ENCODE measurements at regions of chr1 and their contacts with region 1.

Region 1: GRCh38 chr1:205591522-205592351 is 40.1 kb downstream of the ELK4 start:
- DNase-seq: peak; percentile 79 to 94 (median 86)
- H3K4me3 ChIP-seq: peak overlapping the region in 1 of 4 donors; percentile 50
- H3K27ac ChIP-seq: no peak overlapping the region
- H3K4me1 ChIP-seq: peaks cover 0 to 4% of the 10 kb centered on the region in 2 donors
- H3K27me3 ChIP-seq: no peaks in the 10 kb centered on the region
- CTCF ChIP-seq: peak; percentile 92 to 99 (median 99)
- POLR2A ChIP-seq: no peak

Region 2: DNA sequence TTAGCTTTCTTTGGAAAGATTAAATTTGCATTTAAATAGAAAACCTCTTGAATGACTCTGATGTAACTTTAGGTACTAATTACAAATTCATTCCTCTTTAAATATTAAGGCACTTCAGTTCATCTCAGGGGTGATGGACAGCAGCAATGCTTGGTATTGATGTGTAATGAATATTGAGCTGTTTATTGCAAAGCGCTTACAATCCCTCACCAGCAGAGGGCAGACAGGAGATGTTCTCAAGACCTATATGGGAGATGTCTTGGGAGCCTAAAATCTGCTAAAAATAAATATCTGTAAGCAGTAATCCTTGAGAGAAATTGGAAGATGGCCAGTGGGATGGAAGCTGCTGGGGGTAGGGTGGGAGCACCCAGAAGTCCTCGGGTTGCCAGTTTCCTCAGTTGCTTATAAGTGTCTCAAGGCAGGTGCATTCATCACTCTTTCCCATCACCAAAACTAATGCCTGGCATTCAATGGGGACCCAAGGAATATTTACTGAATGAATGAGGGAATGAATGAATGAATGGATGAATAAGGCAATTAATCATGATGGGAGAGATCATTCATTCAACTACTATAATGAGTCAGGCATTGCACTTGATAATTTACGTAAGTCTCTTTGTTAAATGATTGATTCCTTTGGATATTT is 237.4 kb before region 1 on chr1:
- intact Hi-C with region 1: no loop called
- DNase-seq: peak; percentile 63 to 91 (median 75)
- H3K4me3 ChIP-seq: no peak overlapping the region
- H3K27ac ChIP-seq: peak overlapping the region in 2 of 5 donors; percentile 46 to 69
- H3K4me1 ChIP-seq: peaks cover 25 to 27% of the 10 kb centered on the region in 2 donors
- H3K27me3 ChIP-seq: no peaks in the 10 kb centered on the region
- CTCF ChIP-seq: peak; percentile 59 to 90 (median 86)
- POLR2A ChIP-seq: no peak

Region 3: DNA sequence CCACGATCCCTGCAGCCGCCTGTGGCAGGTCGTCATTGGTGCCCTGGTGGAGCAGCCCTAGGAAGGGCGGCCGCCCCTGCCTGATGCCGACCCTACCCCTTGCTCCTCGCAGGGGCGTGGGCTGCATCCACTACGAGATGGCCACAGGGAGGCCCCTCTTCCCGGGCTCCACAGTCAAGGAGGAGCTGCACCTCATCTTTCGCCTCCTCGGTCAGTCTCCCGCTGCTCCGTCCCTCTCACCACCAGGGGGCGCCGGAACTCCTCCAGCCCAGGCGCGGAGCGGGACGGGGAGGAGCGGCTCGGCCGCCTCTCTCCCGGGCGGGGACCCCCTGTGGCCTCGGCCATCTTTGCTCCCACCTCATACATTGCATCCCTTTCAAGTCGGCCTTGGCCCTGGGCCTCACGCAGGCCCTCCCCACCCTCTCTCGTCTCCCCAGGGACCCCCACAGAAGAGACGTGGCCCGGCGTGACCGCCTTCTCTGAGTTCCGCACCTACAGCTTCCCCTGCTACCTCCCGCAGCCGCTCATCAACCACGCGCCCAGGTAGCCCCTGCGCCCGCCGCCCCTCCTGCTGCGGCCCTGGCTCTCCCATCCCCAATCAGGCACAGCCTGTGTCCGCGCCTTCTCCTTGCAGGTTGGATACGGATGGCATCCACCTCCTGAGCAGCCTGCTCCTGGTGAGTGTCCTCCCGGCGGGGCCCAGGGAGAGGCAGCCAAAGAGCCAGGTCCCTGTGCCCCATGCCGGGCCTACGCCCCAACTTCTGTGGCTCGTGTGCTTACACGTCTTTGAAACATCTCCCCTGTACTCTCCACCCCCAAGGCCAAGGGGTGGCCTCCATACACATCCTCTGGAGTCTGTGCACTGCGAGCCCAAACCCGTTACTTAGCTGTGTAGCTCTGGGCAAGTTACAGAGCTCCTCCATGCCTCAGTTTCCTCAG is 62.6 kb before region 1 on chr1:
- intact Hi-C with region 1: loop called (anchors 5 kb)
- DNase-seq: peak; percentile 57 to 86 (median 81)
- H3K4me3 ChIP-seq: peak overlapping the region in 1 of 4 donors; percentile 29
- H3K27ac ChIP-seq: no peak overlapping the region
- H3K4me1 ChIP-seq: no peaks in the 10 kb centered on the region
- H3K27me3 ChIP-seq: no peaks in the 10 kb centered on the region
- CTCF ChIP-seq: peak; percentile 73 to 97 (median 86)
- POLR2A ChIP-seq: no peak

Region 4: GRCh38 chr1:205536759-205537361 is 54.9 kb before region 1 on chr1:
- intact Hi-C with region 1: loop called in 1 of 2 experiments (anchors 5 kb)
- DNase-seq: peak in 6 of 7 donors; percentile 35 to 62 (median 42)
- H3K4me3 ChIP-seq: no peak overlapping the region
- H3K27ac ChIP-seq: no peak overlapping the region
- H3K4me1 ChIP-seq: no peaks in the 10 kb centered on the region
- H3K27me3 ChIP-seq: peaks cover 3% of the 10 kb centered on the region
- CTCF ChIP-seq: no peak
- POLR2A ChIP-seq: no peak

Region 5: DNA sequence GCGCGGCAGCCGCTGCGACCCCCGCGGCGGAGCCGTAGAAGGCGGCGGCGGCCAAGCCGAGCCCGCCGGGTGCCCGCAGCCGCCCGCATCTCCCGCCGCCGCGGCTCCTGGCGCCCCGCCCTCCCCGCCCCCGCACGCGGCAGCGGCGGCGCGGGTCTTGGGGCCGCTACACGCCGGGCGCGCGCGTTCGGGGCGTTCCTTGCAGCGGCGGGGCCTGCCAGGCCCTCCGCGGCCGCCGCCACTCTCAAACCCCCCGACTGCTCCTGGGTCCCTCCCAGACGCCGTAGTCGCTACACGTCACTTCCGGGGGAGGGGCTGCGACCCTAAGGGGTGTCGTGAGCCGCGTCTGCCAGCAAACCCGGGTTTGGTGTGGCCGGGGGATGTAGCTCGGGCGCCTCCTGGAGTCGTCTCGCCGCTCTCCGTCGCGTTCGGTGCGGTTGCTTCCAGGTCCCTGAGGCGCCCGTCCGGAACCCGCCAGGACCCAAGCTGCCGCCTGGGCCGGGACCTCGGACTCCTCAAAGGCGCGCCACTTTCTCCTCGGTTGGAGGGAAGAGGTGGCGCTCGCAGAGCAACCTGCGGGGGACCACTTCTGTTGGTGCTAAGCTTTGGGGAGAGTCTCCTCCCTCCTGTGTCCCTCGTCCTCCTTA is 40.1 kb after region 1 on chr1 and contains the start of gene ELK4:
- intact Hi-C with region 1: loop called in 1 of 2 experiments (anchors 5 kb)
- DNase-seq: peak; percentile 98 to 99 (median 99)
- H3K4me3 ChIP-seq: peak within 1 kb of the TSS in 3 of 4 donors; percentile 3 to 92 (median 68)
- H3K27ac ChIP-seq: peak within 1 kb of the TSS; percentile 35 to 100 (median 94)
- H3K4me1 ChIP-seq: peaks cover 6 to 28% of the 10 kb centered on the region in 2 donors
- H3K27me3 ChIP-seq: no peaks in the 10 kb centered on the region
- CTCF ChIP-seq: peak; percentile 30 to 79 (median 66)
- POLR2A ChIP-seq: peak; percentile 94 to 98
- total RNA-seq, gene ELK4: 11.9 to 40.2 (median 14.9) TPM

Region 6: DNA sequence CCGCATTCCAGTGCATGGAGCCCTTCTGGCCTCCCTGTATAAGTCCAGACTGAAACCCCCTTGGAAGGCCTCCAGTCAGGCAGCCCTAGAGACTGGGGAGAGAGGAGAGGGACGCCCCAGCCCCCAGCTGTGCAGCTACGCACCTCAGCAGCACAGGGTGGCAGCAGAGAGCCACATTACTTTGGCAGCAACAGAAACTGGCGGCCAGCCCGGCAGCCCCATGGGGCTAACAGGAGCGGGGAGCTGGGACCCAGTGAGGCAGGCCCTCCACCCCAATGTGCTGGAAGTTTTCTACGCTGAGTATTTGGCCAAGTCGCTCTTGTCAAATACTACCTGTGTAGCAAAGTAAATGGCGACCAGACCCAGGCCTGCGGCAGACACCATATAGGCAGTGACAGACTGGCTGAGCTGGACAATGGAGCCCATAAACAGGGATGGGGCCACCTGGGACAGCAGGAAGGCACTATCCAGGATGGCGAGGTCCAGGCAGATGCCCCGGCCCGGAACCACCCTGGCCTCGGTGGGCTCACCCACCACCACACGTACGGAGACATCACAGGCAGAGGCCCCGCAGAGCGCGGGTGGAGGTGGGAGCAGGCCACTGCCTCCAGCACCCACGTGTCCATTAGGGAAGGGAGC is 67.3 kb after region 1 on chr1:
- intact Hi-C with region 1: loop called (anchors 1 to 2 kb)
- DNase-seq: peak; percentile 72 to 88 (median 83)
- H3K4me3 ChIP-seq: no peak overlapping the region
- H3K27ac ChIP-seq: no peak overlapping the region
- H3K4me1 ChIP-seq: no peaks in the 10 kb centered on the region
- H3K27me3 ChIP-seq: no peaks in the 10 kb centered on the region
- CTCF ChIP-seq: peak; percentile 59 to 94 (median 88)
- POLR2A ChIP-seq: no peak